ENCODE measurements at regions of chr11 and their contacts with region 1.

Region 1: DNA sequence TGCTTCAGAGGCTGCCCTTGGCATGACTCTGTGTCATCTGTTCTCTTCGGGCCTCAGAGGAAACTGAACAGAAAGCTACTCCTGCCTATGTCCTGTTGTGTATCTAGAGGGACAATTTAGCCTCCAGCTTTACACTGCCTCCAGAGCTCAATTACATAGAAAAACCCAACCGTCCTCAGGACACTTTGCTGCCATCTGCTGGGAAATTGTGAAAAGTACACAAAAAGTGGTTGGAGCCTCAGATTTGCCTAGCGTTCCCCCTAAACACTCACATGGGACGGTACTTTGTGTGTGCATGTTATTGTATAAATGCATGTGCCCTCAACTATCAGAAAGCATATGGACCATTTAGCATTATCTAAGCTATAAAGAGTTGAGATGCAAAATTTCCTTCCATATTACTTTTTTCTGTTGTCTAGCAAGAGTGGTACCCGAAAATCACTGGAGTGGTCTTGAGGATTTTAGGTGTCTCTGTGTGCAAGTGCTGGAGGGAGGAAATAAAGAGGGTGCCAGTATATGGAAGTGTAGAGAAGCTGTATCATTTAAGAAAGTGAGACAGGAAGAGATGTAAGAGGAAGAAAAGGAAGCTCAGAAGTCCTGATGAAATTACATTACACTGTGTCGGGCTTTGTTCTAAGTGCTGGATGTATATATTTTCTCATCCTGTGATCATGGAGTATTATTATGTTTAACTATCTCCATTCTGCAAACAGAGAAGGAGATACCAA is 8.7 kb upstream of the MS4A4E start:
- DNase-seq: peak; percentile 59
- ATAC-seq: peak; percentile 96
- H3K4me3 ChIP-seq: no peak overlapping the region
- H3K27ac ChIP-seq: no peak overlapping the region
- H3K4me1 ChIP-seq: no peaks in the 10 kb centered on the region
- H3K27me3 ChIP-seq: no peaks in the 10 kb centered on the region
- CTCF ChIP-seq: peak; percentile 63 to 78 (median 68)
- EP300 ChIP-seq: no peak
- POLR2A ChIP-seq: no peak
- RAD21 ChIP-seq: peak; percentile 99

Region 2: GRCh38 chr11:59822989-59823566 is 428.6 kb before region 1 on chr11:
- CTCF ChIA-PET with region 1: interaction called, 37 read pairs
- POLR2A ChIA-PET with region 1: no interaction called
- RAD21 ChIA-PET with region 1: interaction called, 10 read pairs
- SMC1A ChIA-PET with region 1: interaction called, 17 read pairs
- in situ Hi-C with region 1: loop called (anchors 5 kb)
- intact Hi-C with region 1: loop called (anchors 1 kb)
- DNase-seq: no peak
- ATAC-seq: peak; percentile 98
- H3K4me3 ChIP-seq: no peak overlapping the region
- H3K27ac ChIP-seq: no peak overlapping the region
- H3K4me1 ChIP-seq: peaks cover 5% of the 10 kb centered on the region; the same call in 1 of the 2 replicates
- H3K27me3 ChIP-seq: no peaks in the 10 kb centered on the region
- CTCF ChIP-seq: peak; percentile 48 to 72 (median 61); a peak in 5 of 6 replicates
- EP300 ChIP-seq: no peak
- POLR2A ChIP-seq: no peak
- RAD21 ChIP-seq: peak; percentile 81

Region 3: GRCh38 chr11:60095477-60096120 is 156.1 kb before region 1 on chr11:
- CTCF ChIA-PET with region 1: no interaction called
- POLR2A ChIA-PET with region 1: no interaction called
- RAD21 ChIA-PET with region 1: no interaction called
- SMC1A ChIA-PET with region 1: no interaction called
- in situ Hi-C with region 1: no loop called
- intact Hi-C with region 1: no loop called
- DNase-seq: no peak
- ATAC-seq: no peak
- H3K4me3 ChIP-seq: no peak overlapping the region
- H3K27ac ChIP-seq: no peak overlapping the region
- H3K4me1 ChIP-seq: no peaks in the 10 kb centered on the region
- H3K27me3 ChIP-seq: no peaks in the 10 kb centered on the region
- CTCF ChIP-seq: no peak
- EP300 ChIP-seq: no peak
- POLR2A ChIP-seq: no peak
- RAD21 ChIP-seq: no peak

Region 4: DNA sequence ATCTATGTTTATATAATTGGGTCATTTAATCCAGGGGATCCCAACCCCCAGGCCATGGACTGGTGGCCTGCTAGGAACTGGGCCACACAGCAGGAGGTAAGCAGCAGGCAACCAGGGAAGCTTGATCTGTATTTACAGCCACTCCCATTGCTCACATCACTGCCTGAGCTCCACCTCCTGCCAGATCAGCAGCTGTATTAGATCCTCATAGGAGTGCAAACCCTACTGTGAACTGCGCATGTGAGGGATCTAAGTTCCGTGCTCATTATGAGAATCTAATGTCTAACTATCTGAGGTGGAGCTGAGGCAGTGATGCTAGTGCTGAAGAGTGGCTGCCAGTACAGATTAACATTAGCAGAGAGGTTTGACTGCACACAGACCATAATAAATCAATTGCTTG is 130.4 kb before region 1 on chr11:
- CTCF ChIA-PET with region 1: interaction called, 66 read pairs
- POLR2A ChIA-PET with region 1: no interaction called
- RAD21 ChIA-PET with region 1: interaction called, 40 read pairs
- SMC1A ChIA-PET with region 1: interaction called, 36 read pairs
- in situ Hi-C with region 1: no loop called
- intact Hi-C with region 1: loop called (anchors 1 kb)
- DNase-seq: no peak
- ATAC-seq: no peak
- H3K4me3 ChIP-seq: no peak overlapping the region
- H3K27ac ChIP-seq: no peak overlapping the region
- H3K4me1 ChIP-seq: no peaks in the 10 kb centered on the region
- H3K27me3 ChIP-seq: no peaks in the 10 kb centered on the region
- CTCF ChIP-seq: no peak
- EP300 ChIP-seq: no peak
- POLR2A ChIP-seq: no peak
- RAD21 ChIP-seq: no peak

Region 5: GRCh38 chr11:60175860-60176275 is 75.8 kb before region 1 on chr11:
- CTCF ChIA-PET with region 1: interaction called, 7 read pairs
- POLR2A ChIA-PET with region 1: no interaction called
- RAD21 ChIA-PET with region 1: interaction called, 16 read pairs
- SMC1A ChIA-PET with region 1: interaction called, 12 read pairs
- in situ Hi-C with region 1: no loop called
- intact Hi-C with region 1: loop called (anchors 5 kb)
- DNase-seq: peak; percentile 80
- ATAC-seq: peak; percentile 96
- H3K4me3 ChIP-seq: no peak overlapping the region
- H3K27ac ChIP-seq: no peak overlapping the region
- H3K4me1 ChIP-seq: peaks cover 9% of the 10 kb centered on the region
- H3K27me3 ChIP-seq: no peaks in the 10 kb centered on the region
- CTCF ChIP-seq: no peak
- EP300 ChIP-seq: no peak
- POLR2A ChIP-seq: no peak
- RAD21 ChIP-seq: no peak

Region 6: DNA sequence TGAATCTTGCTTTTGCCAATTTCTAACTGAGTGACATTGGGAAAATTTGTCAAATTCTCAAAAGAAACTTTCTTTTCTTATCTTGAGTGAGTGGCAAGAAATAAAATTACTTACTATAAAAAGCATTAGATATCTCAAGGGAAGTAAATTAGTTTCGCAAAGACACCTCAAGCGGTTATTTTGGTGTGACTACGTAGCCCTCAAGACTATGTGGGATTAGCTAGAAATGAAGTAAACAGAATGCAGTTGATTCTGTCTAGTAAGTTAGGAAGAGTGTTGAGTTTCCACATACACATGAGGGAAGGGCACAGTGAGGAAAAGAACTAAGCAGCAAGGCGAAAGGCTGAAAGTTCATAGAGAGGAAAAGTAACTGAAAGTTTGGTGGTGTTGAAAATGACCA is 40.4 kb before region 1 on chr11:
- CTCF ChIA-PET with region 1: interaction called, 18 read pairs
- POLR2A ChIA-PET with region 1: no interaction called
- RAD21 ChIA-PET with region 1: interaction called, 3 read pairs
- SMC1A ChIA-PET with region 1: interaction called, 6 read pairs
- in situ Hi-C with region 1: no loop called
- intact Hi-C with region 1: no loop called
- DNase-seq: no peak
- ATAC-seq: peak; percentile 45
- H3K4me3 ChIP-seq: no peak overlapping the region
- H3K27ac ChIP-seq: no peak overlapping the region
- H3K4me1 ChIP-seq: peaks cover 4% of the 10 kb centered on the region; the same call in 1 of the 2 replicates
- H3K27me3 ChIP-seq: no peaks in the 10 kb centered on the region
- CTCF ChIP-seq: no peak
- EP300 ChIP-seq: no peak
- POLR2A ChIP-seq: no peak
- RAD21 ChIP-seq: no peak

Region 7: DNA sequence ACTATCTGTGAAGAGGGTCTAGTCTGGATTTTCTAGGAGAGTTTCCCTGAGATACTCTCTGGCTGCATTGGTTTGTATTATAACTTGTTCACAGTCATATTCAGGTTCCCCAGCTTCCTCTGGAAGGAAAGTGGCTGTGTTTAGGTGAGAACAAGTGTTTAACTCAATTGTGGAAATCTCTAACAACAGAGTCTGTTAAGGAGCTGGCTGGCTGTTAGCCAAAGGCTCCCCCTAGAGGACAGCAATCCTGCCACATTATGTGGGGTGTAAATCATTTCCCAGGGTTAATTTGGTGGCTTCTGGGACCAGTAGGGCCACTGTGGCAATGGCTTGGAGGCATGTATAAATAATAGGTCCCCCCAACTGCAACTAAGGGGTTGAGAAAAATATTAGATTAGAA is 93.8 kb after region 1 on chr11:
- CTCF ChIA-PET with region 1: interaction called, 7 read pairs
- POLR2A ChIA-PET with region 1: no interaction called
- RAD21 ChIA-PET with region 1: interaction called, 11 read pairs
- SMC1A ChIA-PET with region 1: interaction called, 4 read pairs
- in situ Hi-C with region 1: no loop called
- intact Hi-C with region 1: no loop called
- DNase-seq: no peak
- ATAC-seq: peak; percentile 87
- H3K4me3 ChIP-seq: no peak overlapping the region
- H3K27ac ChIP-seq: no peak overlapping the region
- H3K4me1 ChIP-seq: peaks cover 11% of the 10 kb centered on the region
- H3K27me3 ChIP-seq: no peaks in the 10 kb centered on the region
- CTCF ChIP-seq: peak; percentile 63 to 68 (median 66)
- EP300 ChIP-seq: no peak
- POLR2A ChIP-seq: no peak
- RAD21 ChIP-seq: peak; percentile 64

Measured in GM12878 (cell line).